Ascending aorta (tissue), 2 donors: ENCODE measurements at regions of chr17 and their contacts with region 1.

Region 1: GRCh38 chr17:31437720-31438420 is 46.4 kb downstream of the RAB11FIP4 start:
- DNase-seq: no peak
- H3K4me3 ChIP-seq: no peak overlapping the region
- H3K27ac ChIP-seq: no peak overlapping the region
- H3K4me1 ChIP-seq: no peaks in the 10 kb centered on the region
- H3K27me3 ChIP-seq: no peaks in the 10 kb centered on the region
- CTCF ChIP-seq: no peak

Region 2: GRCh38 chr17:31321481-31321880 is 116.4 kb before region 1 on chr17 and contains the start of gene EVI2A:
- intact Hi-C with region 1: no loop called
- DNase-seq: no peak
- H3K4me3 ChIP-seq: peak within 1 kb of the TSS in 1 of 2 donors; percentile 46
- H3K27ac ChIP-seq: peak within 1 kb of the TSS in 1 of 2 donors; percentile 15
- H3K4me1 ChIP-seq: no peaks in the 10 kb centered on the region
- H3K27me3 ChIP-seq: no peaks in the 10 kb centered on the region
- CTCF ChIP-seq: no peak
- total RNA-seq, gene EVI2A: 7.5 TPM

Region 3: GRCh38 chr17:31900877-31901276 is 463.0 kb after region 1 on chr17:
- intact Hi-C with region 1: loop called (anchors 1 kb)
- DNase-seq: no peak
- H3K4me3 ChIP-seq: peak overlapping the region; percentile 73 to 90
- H3K27ac ChIP-seq: peak overlapping the region; percentile 56 to 72
- H3K4me1 ChIP-seq: peaks cover 4 to 9% of the 10 kb centered on the region in 2 donors
- H3K27me3 ChIP-seq: no peaks in the 10 kb centered on the region
- CTCF ChIP-seq: no peak